Endothelial cell of umbilical vein (primary cell): ENCODE measurements at regions of chr1 and their contacts with region 1.

Region 1: DNA sequence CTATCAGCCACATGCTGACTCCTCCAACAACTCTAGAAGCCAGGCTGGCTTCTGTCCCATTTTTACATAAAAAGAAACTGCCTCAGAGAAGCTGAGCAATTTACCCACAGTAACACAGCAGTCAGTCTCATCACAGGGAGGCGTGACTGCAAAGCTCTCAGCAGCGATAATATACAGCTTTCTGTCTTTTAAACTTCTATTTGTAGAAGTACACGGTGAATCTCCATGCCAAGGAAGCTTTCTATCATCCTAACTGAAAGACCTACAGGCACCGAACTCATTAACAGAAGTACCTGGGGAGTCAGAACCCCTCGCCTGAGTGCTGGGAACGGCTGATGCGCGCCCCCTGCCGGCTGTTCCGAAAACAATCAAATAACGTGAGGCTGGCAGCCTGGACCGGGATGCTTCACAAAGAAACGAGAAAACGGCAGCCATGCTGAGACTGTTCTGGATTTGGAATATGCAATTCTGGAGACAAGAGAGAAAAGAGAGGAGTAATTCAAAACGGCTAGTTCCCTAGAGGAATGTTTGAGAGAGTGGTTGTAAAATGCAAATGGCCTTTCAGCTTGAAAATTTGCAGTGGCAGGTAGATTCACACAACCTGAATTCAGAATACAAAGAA is 43.5 kb upstream of the RAB4A start:
- DNase-seq: peak; percentile 66
- H3K4me3 ChIP-seq: no peak overlapping the region
- H3K27ac ChIP-seq: no peak overlapping the region
- H3K4me1 ChIP-seq: peaks cover 3% of the 10 kb centered on the region
- H3K27me3 ChIP-seq: peaks cover 4 to 14% of the 10 kb centered on the region in 2 experiments
- CTCF ChIP-seq: peak; percentile 78 to 84
- POLR2A ChIP-seq: no peak

Region 2: DNA sequence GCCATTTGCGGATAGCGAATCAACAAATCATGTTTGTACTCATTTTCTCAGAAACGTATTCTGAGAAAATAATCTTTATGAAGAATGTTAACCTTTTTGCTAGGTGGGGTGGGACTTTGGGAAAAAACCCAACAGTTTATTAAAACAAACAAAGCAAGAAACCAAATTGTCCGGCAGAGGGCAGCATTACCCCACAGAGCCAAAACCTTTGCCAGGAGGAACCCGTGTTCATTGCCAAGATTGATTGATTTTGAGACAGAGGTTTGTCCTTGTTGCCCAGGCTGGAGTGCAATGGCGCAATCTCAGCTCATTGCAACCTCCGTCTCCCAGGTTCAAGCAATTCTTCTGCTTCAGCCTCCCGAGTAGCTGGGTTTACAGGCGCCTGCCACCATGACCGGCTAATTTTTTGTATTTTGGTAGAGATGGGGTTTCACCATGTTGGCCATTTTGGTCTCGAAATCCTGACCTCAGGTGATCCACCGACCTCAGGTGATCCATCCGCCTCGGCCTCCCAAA is 563.0 kb before region 1 on chr1:
- CTCF ChIA-PET with region 1: interaction called, 123 read pairs
- POLR2A ChIA-PET with region 1: no interaction called
- dilution Hi-C with region 1: no loop called
- intact Hi-C with region 1: loop called (anchors 1 kb)
- DNase-seq: peak; percentile 61
- H3K4me3 ChIP-seq: no peak overlapping the region
- H3K27ac ChIP-seq: no peak overlapping the region
- H3K4me1 ChIP-seq: no peaks in the 10 kb centered on the region
- H3K27me3 ChIP-seq: no peaks in the 10 kb centered on the region
- CTCF ChIP-seq: peak; percentile 60 to 66
- POLR2A ChIP-seq: no peak

Region 3: GRCh38 chr1:228691926-228692325 is 535.5 kb before region 1 on chr1:
- CTCF ChIA-PET with region 1: interaction called, 47 read pairs
- POLR2A ChIA-PET with region 1: no interaction called
- dilution Hi-C with region 1: no loop called
- intact Hi-C with region 1: loop called (anchors 1 kb)
- DNase-seq: peak; percentile 44
- H3K4me3 ChIP-seq: no peak overlapping the region
- H3K27ac ChIP-seq: no peak overlapping the region
- H3K4me1 ChIP-seq: no peaks in the 10 kb centered on the region
- H3K27me3 ChIP-seq: no peaks in the 10 kb centered on the region
- CTCF ChIP-seq: peak in 1 of 2 donors; percentile 5
- POLR2A ChIP-seq: no peak

Region 4: GRCh38 chr1:228734881-228735801 is 492.3 kb before region 1 on chr1 and contains the start of gene RHOU:
- CTCF ChIA-PET with region 1: interaction called, 59 read pairs
- POLR2A ChIA-PET with region 1: no interaction called
- dilution Hi-C with region 1: no loop called
- intact Hi-C with region 1: loop called (anchors 1 kb)
- DNase-seq: peak; percentile 51
- H3K4me3 ChIP-seq: peak within 1 kb of the TSS; percentile 24 to 62 (median 52)
- H3K27ac ChIP-seq: no peak within 1 kb of the TSS
- H3K4me1 ChIP-seq: peaks cover 6% of the 10 kb centered on the region
- H3K27me3 ChIP-seq: peaks cover 29 to 40% of the 10 kb centered on the region in 2 experiments
- CTCF ChIP-seq: peak; percentile 33 to 56
- POLR2A ChIP-seq: no peak
- total RNA-seq, gene RHOU: 0.28 and 0.40 TPM in 2 replicates

Region 5: DNA sequence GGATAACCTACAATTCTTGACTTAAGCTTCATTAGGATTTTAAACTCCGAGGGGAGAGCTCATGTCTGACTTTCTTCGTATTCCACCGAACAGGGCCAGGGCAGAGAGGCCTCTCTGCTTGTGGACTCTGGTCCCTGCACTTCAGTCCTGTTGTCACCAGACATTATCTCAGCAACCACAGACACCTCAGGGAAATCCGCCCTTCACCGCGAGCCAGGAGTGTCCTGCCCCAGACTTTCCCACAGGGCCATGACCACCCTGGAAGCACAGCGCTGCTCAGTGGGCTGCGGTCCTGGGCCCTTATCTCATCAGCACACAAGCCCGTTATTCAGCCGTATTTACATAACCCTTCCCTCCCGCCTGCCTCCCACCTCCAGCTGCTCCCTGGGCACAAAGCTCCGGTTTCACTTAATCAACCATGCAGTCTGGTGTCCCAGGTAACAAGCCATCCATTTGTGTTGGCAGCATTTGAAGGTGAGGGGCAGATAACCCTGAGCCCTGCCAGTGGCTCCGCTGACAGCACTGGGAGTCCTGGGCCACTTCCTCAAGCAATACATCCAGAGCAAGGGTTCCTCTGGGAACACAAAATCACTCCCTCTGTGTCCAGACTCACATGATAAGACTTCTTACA is 79.3 kb before region 1 on chr1:
- CTCF ChIA-PET with region 1: no interaction called
- POLR2A ChIA-PET with region 1: no interaction called
- dilution Hi-C with region 1: no loop called
- intact Hi-C with region 1: no loop called
- DNase-seq: no peak
- H3K4me3 ChIP-seq: no peak overlapping the region
- H3K27ac ChIP-seq: no peak overlapping the region
- H3K4me1 ChIP-seq: no peaks in the 10 kb centered on the region
- H3K27me3 ChIP-seq: no peaks in the 10 kb centered on the region
- CTCF ChIP-seq: no peak
- POLR2A ChIP-seq: no peak

Region 6: GRCh38 chr1:229238674-229239415 is 11.4 kb after region 1 on chr1:
- CTCF ChIA-PET with region 1: interaction called, 25 read pairs
- POLR2A ChIA-PET with region 1: no interaction called
- dilution Hi-C with region 1: no loop called
- intact Hi-C with region 1: no loop called
- DNase-seq: no peak
- H3K4me3 ChIP-seq: no peak overlapping the region
- H3K27ac ChIP-seq: no peak overlapping the region
- H3K4me1 ChIP-seq: no peaks in the 10 kb centered on the region
- H3K27me3 ChIP-seq: peaks cover 0 to 2% of the 10 kb centered on the region in 2 experiments
- CTCF ChIP-seq: no peak
- POLR2A ChIP-seq: no peak